Prostate gland (tissue), 2 donors: ENCODE measurements at regions of chr19 and their contacts with region 1.

Region 1: DNA sequence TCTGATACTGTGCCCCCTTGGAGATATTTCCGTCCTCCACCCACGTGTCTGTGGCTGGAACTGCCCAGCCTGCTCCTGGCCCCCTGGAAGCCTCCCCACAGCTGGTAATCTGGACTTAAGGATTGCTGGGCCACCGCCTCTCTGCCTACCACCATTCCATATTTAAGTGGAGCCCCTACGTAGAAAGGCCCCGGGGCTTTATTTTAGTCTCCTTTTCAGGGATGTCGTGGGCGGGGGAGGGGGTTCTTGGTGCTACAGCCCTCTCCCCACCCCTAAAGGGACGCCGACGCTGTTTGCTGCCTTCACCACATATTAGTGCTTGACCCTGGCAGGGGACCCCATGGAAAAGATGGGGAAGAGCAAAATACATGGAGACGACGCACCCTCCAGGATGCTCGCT is 2.7 kb upstream of the NOP53 start:
- DNase-seq: no peak
- H3K4me3 ChIP-seq: peak overlapping the region in 1 of 2 donors; percentile 43
- H3K27ac ChIP-seq: peak overlapping the region; percentile 91 to 95
- H3K4me1 ChIP-seq: no peaks in the 10 kb centered on the region
- H3K27me3 ChIP-seq: no peaks in the 10 kb centered on the region
- CTCF ChIP-seq: no peak
- POLR2A ChIP-seq: no peak

Region 2: GRCh38 chr19:47713046-47714021 is 29.3 kb before region 1 on chr19 and contains the start of gene EHD2:
- intact Hi-C with region 1: loop called (anchors 1 kb)
- DNase-seq: peak; percentile 42
- H3K4me3 ChIP-seq: peak within 1 kb of the TSS; percentile 44 to 51
- H3K27ac ChIP-seq: peak within 1 kb of the TSS; percentile 83 to 87
- H3K4me1 ChIP-seq: no peaks in the 10 kb centered on the region
- H3K27me3 ChIP-seq: no peaks in the 10 kb centered on the region
- CTCF ChIP-seq: peak; percentile 95 to 98 (median 96)
- POLR2A ChIP-seq: peak; percentile 84
- total RNA-seq, gene EHD2: 48.7 to 83.2 TPM

Region 3: GRCh38 chr19:47729992-47730889 is 12.4 kb before region 1 on chr19:
- intact Hi-C with region 1: loop called (anchors 2 kb)
- DNase-seq: peak; percentile 36
- H3K4me3 ChIP-seq: no peak overlapping the region
- H3K27ac ChIP-seq: peak overlapping the region; percentile 79
- H3K4me1 ChIP-seq: no peaks in the 10 kb centered on the region
- H3K27me3 ChIP-seq: no peaks in the 10 kb centered on the region
- CTCF ChIP-seq: no peak
- POLR2A ChIP-seq: no peak